ENCODE measurements at regions of chr6 and their contacts with region 1.

Region 1: GRCh38 chr6:30238174-30238795 is 25.1 kb upstream of the TRIM26 start:
- DNase-seq: peak in 3 of 5 donors; percentile 25 to 56 (median 34)
- H3K4me3 ChIP-seq: no peak overlapping the region
- H3K4me3 Mint-ChIP-seq: no peak overlapping the region
- H3K27ac ChIP-seq: no peak overlapping the region
- H3K27ac Mint-ChIP-seq: peak overlapping the region in 1 of 8 donors; percentile 85
- H3K4me1 ChIP-seq: no peaks in the 10 kb centered on the region
- H3K4me1 Mint-ChIP-seq: no peaks in the 10 kb centered on the region
- H3K27me3 ChIP-seq: no peaks in the 10 kb centered on the region
- H3K27me3 Mint-ChIP-seq: peaks cover 5 to 33% of the 10 kb centered on the region in 2 donors

Region 2: DNA sequence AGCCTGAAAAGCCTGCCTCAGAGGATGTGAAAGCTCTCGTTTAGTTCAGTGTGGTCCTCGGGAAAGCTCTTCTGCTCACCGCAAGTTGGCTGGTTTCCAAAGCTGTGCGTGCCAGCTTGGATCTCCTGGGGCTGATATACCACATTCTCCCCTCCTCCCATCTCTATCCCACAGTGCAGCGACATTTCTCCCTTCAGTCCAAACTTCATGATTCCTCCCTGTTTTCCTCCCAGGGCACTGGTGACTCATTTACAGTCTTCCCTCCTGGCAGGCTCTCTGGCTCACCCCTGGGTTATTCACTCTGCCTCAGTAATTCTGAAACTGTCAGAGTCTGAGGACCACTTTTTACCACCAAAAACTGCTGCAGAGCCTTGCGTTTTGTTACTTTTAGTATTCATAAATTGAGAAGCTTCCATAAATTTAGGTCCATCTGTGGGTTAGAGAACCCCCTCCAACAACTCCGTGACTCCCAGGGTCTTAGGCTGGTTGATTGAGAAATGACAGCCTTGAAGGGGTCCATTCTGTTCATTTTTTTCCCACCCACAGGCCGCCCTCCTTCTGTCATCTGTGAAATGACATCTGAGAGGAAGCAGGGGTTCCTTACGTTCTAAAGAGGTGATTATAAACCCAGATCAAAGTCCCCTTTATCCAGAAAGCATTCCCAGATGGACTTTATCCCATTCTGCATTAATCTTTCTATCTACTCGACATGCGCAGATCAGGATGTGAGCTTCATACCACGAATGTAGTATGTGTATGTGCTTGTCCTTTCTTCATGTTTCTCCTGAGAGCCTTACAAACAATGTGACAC is 83.4 kb before region 1 on chr6:
- CTCF ChIA-PET with region 1: no interaction called
- POLR2A ChIA-PET with region 1: no interaction called
- DNase-seq: no peak
- H3K4me3 ChIP-seq: no peak overlapping the region
- H3K4me3 Mint-ChIP-seq: no peak overlapping the region
- H3K27ac ChIP-seq: no peak overlapping the region
- H3K27ac Mint-ChIP-seq: no peak overlapping the region
- H3K4me1 ChIP-seq: no peaks in the 10 kb centered on the region
- H3K4me1 Mint-ChIP-seq: peaks cover 4 to 5% (median 5%) of the 10 kb centered on the region in 3 donors
- H3K27me3 ChIP-seq: peaks cover 3% of the 10 kb centered on the region
- H3K27me3 Mint-ChIP-seq: peaks cover 30 to 67% of the 10 kb centered on the region in 2 donors

Region 3: GRCh38 chr6:30219244-30219643 is 19.0 kb before region 1 on chr6:
- CTCF ChIA-PET with region 1: interaction called, 13 read pairs
- POLR2A ChIA-PET with region 1: no interaction called
- DNase-seq: peak in 2 of 5 donors; percentile 27 to 43
- H3K4me3 ChIP-seq: no peak overlapping the region
- H3K4me3 Mint-ChIP-seq: peak overlapping the region in 2 of 7 donors; percentile 9 to 22
- H3K27ac ChIP-seq: no peak overlapping the region
- H3K27ac Mint-ChIP-seq: peak overlapping the region in 1 of 8 donors; percentile 79
- H3K4me1 ChIP-seq: peaks cover 4% of the 10 kb centered on the region
- H3K4me1 Mint-ChIP-seq: peaks cover 15 to 22% (median 18%) of the 10 kb centered on the region in 3 donors
- H3K27me3 ChIP-seq: no peaks in the 10 kb centered on the region
- H3K27me3 Mint-ChIP-seq: peaks cover 0 to 3% of the 10 kb centered on the region in 2 donors

Region 4: GRCh38 chr6:30227763-30228487 is 10.4 kb before region 1 on chr6:
- CTCF ChIA-PET with region 1: interaction called, 10 read pairs
- POLR2A ChIA-PET with region 1: no interaction called
- DNase-seq: peak in 1 of 5 donors; percentile 19
- H3K4me3 ChIP-seq: peak overlapping the region; percentile 0
- H3K4me3 Mint-ChIP-seq: peak overlapping the region; percentile 11 to 78 (median 62)
- H3K27ac ChIP-seq: no peak overlapping the region
- H3K27ac Mint-ChIP-seq: peak overlapping the region; percentile 70 to 98 (median 83)
- H3K4me1 ChIP-seq: peaks cover 5% of the 10 kb centered on the region
- H3K4me1 Mint-ChIP-seq: peaks cover 16 to 19% (median 17%) of the 10 kb centered on the region in 3 donors
- H3K27me3 ChIP-seq: no peaks in the 10 kb centered on the region
- H3K27me3 Mint-ChIP-seq: peaks cover 1 to 2% of the 10 kb centered on the region in 2 donors

Region 5: DNA sequence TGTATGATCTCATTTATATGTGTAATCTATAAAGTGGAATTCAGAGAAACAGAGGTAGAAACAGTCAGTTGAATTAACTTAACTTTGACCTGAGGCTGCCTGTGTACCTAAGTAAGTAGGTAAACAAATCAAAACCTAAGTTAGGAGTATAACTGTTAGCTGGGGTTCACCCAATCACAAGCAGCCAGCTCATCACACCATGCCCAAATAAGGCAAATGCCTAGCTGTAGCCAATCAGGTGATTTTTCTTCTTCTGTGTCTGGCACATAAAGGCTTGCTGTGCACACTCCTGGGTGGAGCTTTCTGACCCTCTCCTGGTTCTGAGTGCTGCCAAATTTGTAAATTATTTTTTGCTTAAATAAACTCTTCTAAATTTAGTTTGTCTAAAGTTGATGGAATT is 33.7 kb after region 1 on chr6:
- CTCF ChIA-PET with region 1: no interaction called
- POLR2A ChIA-PET with region 1: no interaction called
- DNase-seq: no peak
- H3K4me3 ChIP-seq: no peak overlapping the region
- H3K4me3 Mint-ChIP-seq: no peak overlapping the region
- H3K27ac ChIP-seq: no peak overlapping the region
- H3K27ac Mint-ChIP-seq: no peak overlapping the region
- H3K4me1 ChIP-seq: no peaks in the 10 kb centered on the region
- H3K4me1 Mint-ChIP-seq: no peaks in the 10 kb centered on the region
- H3K27me3 ChIP-seq: no peaks in the 10 kb centered on the region
- H3K27me3 Mint-ChIP-seq: peaks cover 4 to 12% of the 10 kb centered on the region in 2 donors

Region 6: DNA sequence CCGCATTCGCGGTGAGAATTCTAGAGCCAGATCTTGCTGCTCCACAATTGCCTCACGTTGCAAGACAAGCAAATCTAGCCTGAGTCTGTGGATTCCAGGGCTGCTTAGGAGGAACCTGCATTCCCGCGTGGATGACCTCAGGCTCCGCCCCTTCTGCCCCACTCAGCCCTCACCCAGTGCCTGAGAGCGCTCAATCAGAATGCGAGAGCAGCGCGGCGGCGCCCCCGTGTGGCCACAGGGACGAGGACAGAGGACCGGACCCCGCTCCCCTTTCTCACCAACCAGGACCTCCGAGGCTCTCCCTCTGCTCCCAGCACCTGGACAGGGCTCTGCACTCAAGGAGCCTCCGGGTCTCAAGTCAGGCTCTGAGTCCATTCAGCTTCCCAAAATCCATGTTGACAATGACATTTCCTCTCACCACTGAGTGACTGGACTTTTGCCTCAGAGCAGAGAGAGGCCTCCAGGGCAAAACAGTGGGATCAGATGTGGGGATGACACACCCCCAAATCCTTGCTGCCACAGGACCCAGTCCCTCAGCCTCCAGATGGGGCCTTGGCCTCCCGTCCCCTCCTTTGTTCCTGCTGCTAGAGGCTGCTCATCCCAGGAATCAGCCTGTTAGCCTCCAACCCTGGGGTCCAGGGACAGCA is 158.7 kb after region 1 on chr6:
- CTCF ChIA-PET with region 1: interaction called, 15 read pairs
- POLR2A ChIA-PET with region 1: no interaction called
- DNase-seq: peak; percentile 69 to 88 (median 80)
- H3K4me3 ChIP-seq: no peak overlapping the region
- H3K4me3 Mint-ChIP-seq: peak overlapping the region in 1 of 7 donors; percentile 59
- H3K27ac ChIP-seq: no peak overlapping the region
- H3K27ac Mint-ChIP-seq: no peak overlapping the region
- H3K4me1 ChIP-seq: no peaks in the 10 kb centered on the region
- H3K4me1 Mint-ChIP-seq: peaks cover 0 to 4% (median 0%) of the 10 kb centered on the region in 3 donors
- H3K27me3 ChIP-seq: peaks cover 16% of the 10 kb centered on the region
- H3K27me3 Mint-ChIP-seq: peaks cover 18 to 45% of the 10 kb centered on the region in 2 donors

Measured in CD8-positive, alpha-beta memory T cell (primary cell).